K562 (cell line): ENCODE measurements at regions of chr2 and their contacts with region 1.

Region 1: GRCh38 chr2:88139203-88139702 is 11.4 kb upstream of the FABP1 start:
- DNase-seq: no peak
- ATAC-seq: no peak
- H3K4me3 ChIP-seq: no peak overlapping the region
- H3K27ac ChIP-seq: no peak overlapping the region
- H3K4me1 ChIP-seq: no peaks in the 10 kb centered on the region
- H3K27me3 ChIP-seq: peaks cover 9 to 17% of the 10 kb centered on the region in 2 experiments; a peak in 4 of 5 replicates
- CTCF ChIP-seq: no peak
- EP300 ChIP-seq: no peak
- POLR2A ChIP-seq: no peak
- RAD21 ChIP-seq: no peak

Region 2: DNA sequence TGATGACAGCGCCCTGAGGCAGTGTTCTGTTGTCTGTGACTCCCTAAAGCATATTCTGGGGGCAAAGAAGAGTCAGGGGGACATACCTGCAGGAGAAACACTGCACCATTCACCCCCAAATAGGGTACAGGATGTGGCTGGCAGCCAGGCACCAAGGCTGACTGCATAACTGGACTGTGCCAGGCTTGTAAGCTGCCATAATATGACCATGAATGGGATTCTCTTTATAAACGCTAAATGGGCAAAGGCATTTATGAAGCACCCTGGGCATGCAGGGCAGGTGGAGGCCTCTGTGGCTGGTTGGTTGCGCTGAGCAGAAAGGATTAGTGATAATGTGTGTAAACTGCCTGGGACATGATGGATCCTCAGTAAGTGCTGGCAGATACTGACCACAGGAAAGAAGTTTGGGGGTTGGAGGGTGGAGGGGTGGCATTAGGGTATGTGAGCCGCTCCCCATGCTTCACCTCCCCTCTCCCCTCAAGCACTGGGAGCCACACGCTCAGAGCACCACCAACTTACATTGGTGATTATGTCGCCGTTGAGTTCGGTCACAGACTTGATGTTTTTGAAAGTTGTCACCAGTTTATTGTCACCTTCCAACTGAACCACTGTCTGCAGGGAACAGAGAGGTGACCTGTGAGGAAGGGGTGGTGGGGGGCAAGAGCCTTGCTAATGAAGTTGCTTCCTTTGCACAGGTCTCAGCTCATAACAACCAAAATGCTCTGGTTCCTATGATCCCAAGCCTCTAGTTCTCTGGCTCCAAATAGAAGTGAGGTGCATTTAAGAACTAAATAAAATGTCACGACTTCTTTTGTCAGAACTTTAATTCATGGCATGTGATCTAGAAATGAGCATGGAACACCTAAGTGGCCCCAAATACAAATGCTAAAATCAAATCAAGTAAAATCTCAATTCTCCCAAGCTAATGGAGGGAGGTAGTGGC is 15.0 kb before region 1 on chr2:
- CTCF ChIA-PET with region 1: no interaction called
- POLR2A ChIA-PET with region 1: interaction called, 3 read pairs
- in situ Hi-C with region 1: no loop called
- intact Hi-C with region 1: loop called (anchors 1 kb)
- DNase-seq: no peak
- ATAC-seq: no peak
- H3K4me3 ChIP-seq: no peak overlapping the region
- H3K27ac ChIP-seq: no peak overlapping the region
- H3K4me1 ChIP-seq: no peaks in the 10 kb centered on the region
- H3K27me3 ChIP-seq: peaks cover 39 to 62% of the 10 kb centered on the region in 2 experiments
- CTCF ChIP-seq: no peak
- EP300 ChIP-seq: no peak
- POLR2A ChIP-seq: no peak
- RAD21 ChIP-seq: no peak

Region 3: DNA sequence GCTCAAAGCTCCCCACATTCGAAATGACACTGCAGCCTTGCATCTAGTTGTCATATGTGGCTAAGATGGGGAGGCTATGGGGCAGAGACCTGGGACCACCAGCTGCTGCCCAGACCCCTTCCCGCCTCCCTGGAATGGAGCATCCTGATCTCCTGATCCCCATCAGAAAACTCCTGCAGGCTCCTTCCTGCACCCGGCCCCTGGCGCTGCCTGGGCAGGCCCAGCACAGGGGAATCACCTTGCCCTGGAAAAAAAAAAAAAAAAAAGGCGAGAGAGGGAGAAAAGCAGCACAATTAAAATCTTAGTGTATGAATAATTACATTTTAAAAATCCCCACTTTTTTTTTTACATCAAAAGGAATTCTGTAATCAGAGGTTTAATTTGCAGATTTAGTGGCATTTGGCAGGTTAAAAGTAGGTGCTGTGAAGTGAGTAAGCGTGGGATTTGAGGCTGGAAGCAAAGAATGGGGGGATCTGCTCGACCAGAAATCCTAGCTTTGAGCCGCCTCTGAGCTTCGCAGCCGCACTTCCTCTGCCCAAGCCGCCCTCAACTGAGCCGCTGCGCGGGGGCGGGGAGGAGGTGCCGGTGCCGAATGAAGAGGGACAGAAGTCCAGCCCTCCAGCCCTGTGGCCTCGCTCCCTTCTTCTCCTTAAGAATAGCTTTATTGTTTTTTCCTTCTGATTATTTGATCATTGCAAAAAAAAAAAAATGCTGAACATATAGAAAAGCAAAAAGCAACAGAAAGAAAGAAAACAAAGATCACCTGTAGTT is 60.8 kb after region 1 on chr2:
- CTCF ChIA-PET with region 1: no interaction called
- POLR2A ChIA-PET with region 1: no interaction called
- in situ Hi-C with region 1: no loop called
- intact Hi-C with region 1: no loop called
- DNase-seq: peak in 1 of 4 experiments; percentile 40
- ATAC-seq: peak; percentile 75
- H3K4me3 ChIP-seq: no peak overlapping the region
- H3K27ac ChIP-seq: no peak overlapping the region
- H3K4me1 ChIP-seq: peaks cover 0 to 3% of the 10 kb centered on the region in 2 experiments; a peak in 1 of 5 replicates
- H3K27me3 ChIP-seq: peaks cover 19 to 39% of the 10 kb centered on the region in 2 experiments
- CTCF ChIP-seq: no peak
- EP300 ChIP-seq: no peak
- POLR2A ChIP-seq: no peak
- RAD21 ChIP-seq: no peak